ENCODE measurements at regions of chr12 and their contacts with region 1.

Region 1: DNA sequence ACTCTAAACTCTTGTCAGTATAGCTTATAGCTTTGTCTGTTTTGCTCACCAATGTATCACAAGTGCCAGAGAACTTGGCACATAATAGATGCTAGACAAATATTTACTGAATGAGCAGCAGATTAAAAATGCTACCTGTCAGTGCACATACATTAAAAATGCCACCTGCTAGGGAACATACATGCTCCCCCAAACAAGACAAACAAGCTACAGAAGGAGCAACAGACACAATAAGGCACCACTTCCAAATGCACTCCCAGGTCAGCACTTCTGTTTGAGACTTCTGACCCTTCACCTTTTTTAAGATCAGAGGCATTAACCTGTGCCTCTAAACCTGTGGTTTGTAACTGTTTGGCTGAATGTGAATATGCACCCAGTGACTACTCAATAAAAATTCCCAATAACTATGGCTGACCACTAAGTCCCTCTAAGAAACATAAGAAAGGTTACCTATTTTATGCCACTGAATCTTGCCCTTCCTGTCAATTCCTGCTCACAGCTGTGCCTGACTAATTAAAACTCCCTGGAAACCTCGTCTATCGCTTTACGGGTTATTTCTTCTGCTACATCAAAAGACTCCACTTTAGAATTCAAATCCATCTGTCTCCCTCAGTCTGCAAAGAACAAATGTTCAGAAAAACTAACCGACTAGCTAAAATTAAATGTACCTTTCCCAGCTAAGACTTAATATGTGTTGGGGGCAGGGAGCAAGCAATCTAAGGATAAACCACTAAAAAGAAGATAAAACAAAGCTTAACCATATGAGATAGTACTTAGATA is 41.0 kb downstream of the HECTD4 start:
- DNase-seq: peak; percentile 94
- ATAC-seq: peak; percentile 96
- H3K4me3 ChIP-seq: peak overlapping the region; percentile 3; the same call in 1 of the 2 replicates
- H3K27ac ChIP-seq: peak overlapping the region; percentile 9
- H3K4me1 ChIP-seq: peaks cover 26% of the 10 kb centered on the region
- H3K27me3 ChIP-seq: no peaks in the 10 kb centered on the region
- CTCF ChIP-seq: no peak

Region 2: GRCh38 chr12:112252184-112252583 is 89.1 kb before region 1 on chr12:
- CTCF ChIA-PET with region 1: no interaction called
- POLR2A ChIA-PET with region 1: no interaction called
- intact Hi-C with region 1: loop called (anchors 1 kb)
- DNase-seq: peak; percentile 58
- ATAC-seq: peak; percentile 100
- H3K4me3 ChIP-seq: no peak overlapping the region
- H3K27ac ChIP-seq: no peak overlapping the region
- H3K4me1 ChIP-seq: no peaks in the 10 kb centered on the region; the same call in 1 of the 2 replicates
- H3K27me3 ChIP-seq: no peaks in the 10 kb centered on the region
- CTCF ChIP-seq: no peak

Region 3: DNA sequence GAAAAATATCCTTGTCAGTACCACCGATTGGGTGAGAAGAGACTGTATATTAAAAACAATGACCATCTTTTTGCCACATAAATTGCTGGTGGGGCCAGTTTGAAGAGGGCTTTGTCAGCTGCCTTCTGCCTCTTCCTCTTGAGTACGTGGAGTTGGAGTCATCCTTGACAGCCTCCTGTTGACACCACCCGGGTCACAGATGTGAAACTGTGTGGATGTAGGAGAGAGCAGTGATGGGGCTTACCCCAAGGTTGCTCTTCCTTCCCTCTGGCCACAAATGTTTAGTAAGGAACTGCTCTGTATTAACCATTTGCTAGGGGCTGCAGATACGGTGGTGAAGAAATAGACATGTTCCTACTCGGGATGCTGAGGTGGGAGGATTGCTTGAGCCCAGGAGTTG is 89.7 kb after region 1 on chr12:
- CTCF ChIA-PET with region 1: no interaction called
- POLR2A ChIA-PET with region 1: no interaction called
- intact Hi-C with region 1: no loop called
- DNase-seq: no peak
- ATAC-seq: no peak
- H3K4me3 ChIP-seq: no peak overlapping the region
- H3K27ac ChIP-seq: no peak overlapping the region
- H3K4me1 ChIP-seq: no peaks in the 10 kb centered on the region
- H3K27me3 ChIP-seq: no peaks in the 10 kb centered on the region
- CTCF ChIP-seq: no peak

Region 4: DNA sequence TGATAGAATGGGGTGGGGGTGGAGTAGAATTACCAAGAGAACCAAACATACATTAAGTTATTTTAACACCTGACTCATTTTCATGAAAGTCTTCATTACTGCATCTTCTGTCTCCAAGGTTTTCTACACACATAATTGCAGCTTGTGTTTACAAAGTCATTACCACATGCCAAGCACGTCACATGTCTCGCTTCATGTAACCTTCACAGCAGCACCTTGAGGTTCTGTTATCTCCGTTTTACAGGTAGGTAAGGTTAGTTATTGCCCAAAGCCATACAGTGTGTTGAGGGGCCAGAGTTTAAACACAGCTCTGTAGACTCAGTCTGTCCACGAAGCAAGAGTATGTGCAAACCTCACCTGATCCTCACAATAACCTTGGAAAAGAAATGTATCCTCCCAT is 1689.2 kb after region 1 on chr12:
- CTCF ChIA-PET with region 1: no interaction called
- POLR2A ChIA-PET with region 1: no interaction called
- intact Hi-C with region 1: no loop called
- DNase-seq: no peak
- ATAC-seq: no peak
- H3K4me3 ChIP-seq: no peak overlapping the region
- H3K27ac ChIP-seq: no peak overlapping the region
- H3K4me1 ChIP-seq: no peaks in the 10 kb centered on the region
- H3K27me3 ChIP-seq: peaks cover 51% of the 10 kb centered on the region
- CTCF ChIP-seq: no peak

Measured in PC-3 (cell line).